Transverse colon (tissue), 4 donors: ENCODE measurements at regions of chr11 and their contacts with region 1.

Region 1: GRCh38 chr11:102007567-102008437 is 39.4 kb upstream of the CFAP300 start:
- DNase-seq: peak; percentile 60
- H3K4me3 ChIP-seq: no peak overlapping the region
- H3K27ac ChIP-seq: peak overlapping the region; percentile 73 to 83 (median 78)
- H3K4me1 ChIP-seq: peaks cover 3 to 19% (median 14%) of the 10 kb centered on the region in 4 donors
- H3K27me3 ChIP-seq: no peaks in the 10 kb centered on the region
- CTCF ChIP-seq: peak; percentile 51 to 69 (median 62)
- EP300 ChIP-seq: no peak
- POLR2A ChIP-seq: no peak

Region 2: GRCh38 chr11:101436511-101437142 is 571.2 kb before region 1 on chr11:
- in situ Hi-C with region 1: loop called in 1 of 4 experiments (anchors 25 kb)
- intact Hi-C with region 1: no loop called
- DNase-seq: peak; percentile 34
- H3K4me3 ChIP-seq: no peak overlapping the region
- H3K27ac ChIP-seq: no peak overlapping the region
- H3K4me1 ChIP-seq: no peaks in the 10 kb centered on the region
- H3K27me3 ChIP-seq: no peaks in the 10 kb centered on the region
- CTCF ChIP-seq: peak; percentile 44 to 56 (median 52)
- EP300 ChIP-seq: no peak
- POLR2A ChIP-seq: no peak

Region 3: DNA sequence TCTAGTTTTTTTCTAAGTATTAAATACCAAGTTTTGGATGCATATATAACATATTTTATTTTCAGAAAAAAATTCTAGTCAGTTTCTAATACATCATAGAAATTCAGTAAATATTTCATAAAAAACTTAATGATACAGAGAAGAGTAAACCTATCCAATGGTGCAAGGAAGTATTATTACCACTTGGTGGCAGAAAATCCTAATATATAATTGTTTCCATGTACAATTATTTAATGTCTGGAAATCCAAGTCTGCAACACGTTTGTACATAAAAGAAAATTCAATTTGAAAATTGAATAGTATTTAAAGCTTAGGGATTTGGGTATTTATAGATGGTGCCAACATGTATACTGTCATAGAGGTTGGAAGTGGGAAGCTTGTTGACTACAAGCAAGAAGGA is 551.0 kb before region 1 on chr11:
- in situ Hi-C with region 1: loop called in 1 of 4 experiments (anchors 25 kb)
- intact Hi-C with region 1: no loop called
- DNase-seq: no peak
- H3K4me3 ChIP-seq: no peak overlapping the region
- H3K27ac ChIP-seq: no peak overlapping the region
- H3K4me1 ChIP-seq: no peaks in the 10 kb centered on the region
- H3K27me3 ChIP-seq: no peaks in the 10 kb centered on the region
- CTCF ChIP-seq: peak; percentile 22 to 42 (median 36)
- EP300 ChIP-seq: no peak
- POLR2A ChIP-seq: no peak

Region 4: DNA sequence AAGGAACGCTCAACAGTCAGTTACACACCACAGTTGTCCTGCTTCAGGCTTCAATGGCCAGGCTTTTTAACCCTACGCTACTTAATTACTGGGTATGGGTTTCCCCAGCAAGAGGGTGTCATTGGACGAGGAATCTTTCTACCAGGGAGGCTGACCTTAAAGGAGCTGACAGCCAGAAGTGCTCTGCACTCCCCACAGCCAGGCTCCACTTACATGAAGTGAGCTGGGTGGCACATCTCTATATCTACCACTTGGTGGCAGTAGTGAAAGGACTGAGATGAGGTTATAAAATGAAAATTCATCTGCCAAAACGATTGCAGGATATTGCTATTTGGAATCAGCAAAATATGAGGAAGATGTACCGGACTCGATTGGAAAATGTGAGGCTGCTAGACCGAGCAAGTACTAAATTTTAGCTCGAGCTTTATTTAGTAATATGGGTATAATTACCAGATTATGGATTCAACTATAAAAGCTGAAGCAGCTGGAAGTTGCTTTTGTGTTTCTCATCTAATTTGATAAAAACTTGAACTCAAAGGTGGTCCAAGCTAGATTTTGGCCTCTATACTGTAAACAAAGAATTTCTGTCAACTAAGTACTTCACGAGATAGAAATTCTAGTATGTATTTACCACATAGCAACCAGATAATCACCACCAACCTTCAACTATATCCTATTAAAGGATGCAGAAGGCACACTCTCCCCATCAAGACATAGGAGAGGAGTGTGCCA is 146.9 kb before region 1 on chr11:
- in situ Hi-C with region 1: loop called (anchors 5 to 25 kb)
- intact Hi-C with region 1: loop called (anchors 5 kb)
- DNase-seq: peak; percentile 29
- H3K4me3 ChIP-seq: no peak overlapping the region
- H3K27ac ChIP-seq: no peak overlapping the region
- H3K4me1 ChIP-seq: no peaks in the 10 kb centered on the region
- H3K27me3 ChIP-seq: no peaks in the 10 kb centered on the region
- CTCF ChIP-seq: peak; percentile 70 to 85 (median 71)
- EP300 ChIP-seq: no peak
- POLR2A ChIP-seq: no peak

Region 5: DNA sequence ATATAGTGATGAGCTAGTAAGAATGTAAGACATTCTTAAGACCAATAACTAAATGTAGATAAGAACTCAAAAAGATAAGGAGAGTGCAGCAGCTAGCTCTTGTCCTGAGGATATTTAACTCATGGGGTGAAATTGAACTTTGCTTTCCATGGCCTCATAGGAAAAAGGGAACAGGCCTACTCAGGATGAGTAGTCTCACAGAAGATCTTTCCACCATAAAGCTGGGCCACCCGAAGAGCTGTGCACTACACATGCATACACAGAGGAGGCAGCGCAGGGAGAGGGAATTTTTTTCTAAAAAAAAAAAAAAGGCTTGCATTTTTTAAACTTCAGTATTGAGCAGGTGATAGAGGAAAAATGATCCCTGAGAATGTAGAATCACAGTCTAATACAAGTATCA is 20.4 kb before region 1 on chr11:
- in situ Hi-C with region 1: no loop called
- intact Hi-C with region 1: no loop called
- DNase-seq: no peak
- H3K4me3 ChIP-seq: no peak overlapping the region
- H3K27ac ChIP-seq: no peak overlapping the region
- H3K4me1 ChIP-seq: no peaks in the 10 kb centered on the region
- H3K27me3 ChIP-seq: no peaks in the 10 kb centered on the region
- CTCF ChIP-seq: no peak
- EP300 ChIP-seq: no peak
- POLR2A ChIP-seq: no peak